ENCODE measurements at regions of chr7 and their contacts with region 1.

Region 1: GRCh38 chr7:37234928-37235327 is 213.7 kb downstream of the ELMO1 start:
- DNase-seq: peak; percentile 14
- ATAC-seq: no peak
- H3K4me3 Mint-ChIP-seq: no peak overlapping the region
- H3K27ac Mint-ChIP-seq: no peak overlapping the region
- H3K4me1 Mint-ChIP-seq: peaks cover 12% of the 10 kb centered on the region
- H3K27me3 Mint-ChIP-seq: no peaks in the 10 kb centered on the region
- CTCF ChIP-seq: peak; percentile 52

Region 2: GRCh38 chr7:37216923-37217322 is 18.0 kb before region 1 on chr7:
- CTCF ChIA-PET with region 1: no interaction called
- POLR2A ChIA-PET with region 1: no interaction called
- intact Hi-C with region 1: no loop called
- DNase-seq: no peak
- ATAC-seq: no peak
- H3K4me3 Mint-ChIP-seq: no peak overlapping the region
- H3K27ac Mint-ChIP-seq: no peak overlapping the region
- H3K4me1 Mint-ChIP-seq: peaks cover 2% of the 10 kb centered on the region
- H3K27me3 Mint-ChIP-seq: no peaks in the 10 kb centered on the region
- CTCF ChIP-seq: no peak

Region 3: GRCh38 chr7:37448636-37449361 is 213.9 kb after region 1 on chr7 and contains the start of gene ELMO1:
- CTCF ChIA-PET with region 1: interaction called, 6 read pairs
- POLR2A ChIA-PET with region 1: no interaction called
- intact Hi-C with region 1: loop called (anchors 10 kb)
- DNase-seq: peak; percentile 87
- ATAC-seq: peak; percentile 85
- H3K4me3 Mint-ChIP-seq: peak within 1 kb of the TSS; percentile 92
- H3K27ac Mint-ChIP-seq: peak within 1 kb of the TSS; percentile 97
- H3K4me1 Mint-ChIP-seq: peaks cover 34% of the 10 kb centered on the region
- H3K27me3 Mint-ChIP-seq: no peaks in the 10 kb centered on the region
- CTCF ChIP-seq: peak; percentile 54
- total RNA-seq, gene ELMO1: 72.8 to 75.3 TPM

Region 4: GRCh38 chr7:37495574-37496184 is 260.8 kb after region 1 on chr7:
- CTCF ChIA-PET with region 1: interaction called, 26 read pairs
- POLR2A ChIA-PET with region 1: no interaction called
- intact Hi-C with region 1: loop called (anchors 10 kb)
- DNase-seq: no peak
- ATAC-seq: peak; percentile 56
- H3K4me3 Mint-ChIP-seq: no peak overlapping the region
- H3K27ac Mint-ChIP-seq: no peak overlapping the region
- H3K4me1 Mint-ChIP-seq: peaks cover 7% of the 10 kb centered on the region
- H3K27me3 Mint-ChIP-seq: no peaks in the 10 kb centered on the region
- CTCF ChIP-seq: peak; percentile 79

Region 5: DNA sequence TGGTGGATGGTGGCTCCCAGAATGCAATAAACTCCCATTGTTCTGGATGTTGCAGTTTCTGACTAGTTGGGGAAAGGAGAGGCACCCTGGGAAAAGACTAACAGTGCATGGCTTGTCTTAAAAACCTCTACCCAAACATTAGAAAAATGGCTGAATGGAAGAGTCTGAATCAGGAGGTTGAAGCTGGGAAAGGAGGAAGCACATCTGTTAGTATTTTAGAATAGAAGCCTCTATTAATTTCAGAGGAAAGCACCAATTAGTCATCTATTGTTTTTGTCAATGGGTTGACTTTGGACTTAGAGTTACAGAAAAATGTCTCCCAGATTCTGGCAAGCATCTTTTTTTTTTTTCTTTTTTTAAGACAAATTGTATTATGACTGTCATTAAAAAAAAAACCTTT is 269.9 kb after region 1 on chr7:
- CTCF ChIA-PET with region 1: interaction called, 25 read pairs
- POLR2A ChIA-PET with region 1: no interaction called
- intact Hi-C with region 1: loop called (anchors 10 kb)
- DNase-seq: no peak
- ATAC-seq: no peak
- H3K4me3 Mint-ChIP-seq: no peak overlapping the region
- H3K27ac Mint-ChIP-seq: no peak overlapping the region
- H3K4me1 Mint-ChIP-seq: no peaks in the 10 kb centered on the region
- H3K27me3 Mint-ChIP-seq: peaks cover 6% of the 10 kb centered on the region
- CTCF ChIP-seq: no peak

Region 6: GRCh38 chr7:37510043-37510634 is 275.2 kb after region 1 on chr7:
- CTCF ChIA-PET with region 1: interaction called, 25 read pairs
- POLR2A ChIA-PET with region 1: no interaction called
- intact Hi-C with region 1: loop called (anchors 10 kb)
- DNase-seq: peak; percentile 45
- ATAC-seq: peak; percentile 80
- H3K4me3 Mint-ChIP-seq: no peak overlapping the region
- H3K27ac Mint-ChIP-seq: no peak overlapping the region
- H3K4me1 Mint-ChIP-seq: no peaks in the 10 kb centered on the region
- H3K27me3 Mint-ChIP-seq: peaks cover 4% of the 10 kb centered on the region
- CTCF ChIP-seq: peak; percentile 87

Region 7: GRCh38 chr7:37577412-37577811 is 342.5 kb after region 1 on chr7:
- CTCF ChIA-PET with region 1: no interaction called
- POLR2A ChIA-PET with region 1: no interaction called
- intact Hi-C with region 1: no loop called
- DNase-seq: no peak
- ATAC-seq: no peak
- H3K4me3 Mint-ChIP-seq: no peak overlapping the region
- H3K27ac Mint-ChIP-seq: no peak overlapping the region
- H3K4me1 Mint-ChIP-seq: no peaks in the 10 kb centered on the region
- H3K27me3 Mint-ChIP-seq: peaks cover 15% of the 10 kb centered on the region
- CTCF ChIP-seq: no peak

Region 8: GRCh38 chr7:37709631-37710509 is 474.9 kb after region 1 on chr7:
- CTCF ChIA-PET with region 1: no interaction called
- POLR2A ChIA-PET with region 1: no interaction called
- intact Hi-C with region 1: no loop called
- DNase-seq: no peak
- ATAC-seq: peak; percentile 60
- H3K4me3 Mint-ChIP-seq: no peak overlapping the region
- H3K27ac Mint-ChIP-seq: no peak overlapping the region
- H3K4me1 Mint-ChIP-seq: peaks cover 2% of the 10 kb centered on the region
- H3K27me3 Mint-ChIP-seq: peaks cover 4% of the 10 kb centered on the region
- CTCF ChIP-seq: no peak

Measured in activated CD8-positive, alpha-beta T cell treated with anti-CD3 and anti-CD28 coated beads for 36 hours (primary cell).